Right ventricle myocardium inferior (tissue), 1 donor: ENCODE measurements at regions of chr19 and their contacts with region 1.

Region 1: GRCh38 chr19:45001087-45001739 is at the start of gene RELB:
- DNase-seq: peak; percentile 98
- ATAC-seq: peak; percentile 59
- total RNA-seq, gene RELB: 4.2 TPM

Region 2: DNA sequence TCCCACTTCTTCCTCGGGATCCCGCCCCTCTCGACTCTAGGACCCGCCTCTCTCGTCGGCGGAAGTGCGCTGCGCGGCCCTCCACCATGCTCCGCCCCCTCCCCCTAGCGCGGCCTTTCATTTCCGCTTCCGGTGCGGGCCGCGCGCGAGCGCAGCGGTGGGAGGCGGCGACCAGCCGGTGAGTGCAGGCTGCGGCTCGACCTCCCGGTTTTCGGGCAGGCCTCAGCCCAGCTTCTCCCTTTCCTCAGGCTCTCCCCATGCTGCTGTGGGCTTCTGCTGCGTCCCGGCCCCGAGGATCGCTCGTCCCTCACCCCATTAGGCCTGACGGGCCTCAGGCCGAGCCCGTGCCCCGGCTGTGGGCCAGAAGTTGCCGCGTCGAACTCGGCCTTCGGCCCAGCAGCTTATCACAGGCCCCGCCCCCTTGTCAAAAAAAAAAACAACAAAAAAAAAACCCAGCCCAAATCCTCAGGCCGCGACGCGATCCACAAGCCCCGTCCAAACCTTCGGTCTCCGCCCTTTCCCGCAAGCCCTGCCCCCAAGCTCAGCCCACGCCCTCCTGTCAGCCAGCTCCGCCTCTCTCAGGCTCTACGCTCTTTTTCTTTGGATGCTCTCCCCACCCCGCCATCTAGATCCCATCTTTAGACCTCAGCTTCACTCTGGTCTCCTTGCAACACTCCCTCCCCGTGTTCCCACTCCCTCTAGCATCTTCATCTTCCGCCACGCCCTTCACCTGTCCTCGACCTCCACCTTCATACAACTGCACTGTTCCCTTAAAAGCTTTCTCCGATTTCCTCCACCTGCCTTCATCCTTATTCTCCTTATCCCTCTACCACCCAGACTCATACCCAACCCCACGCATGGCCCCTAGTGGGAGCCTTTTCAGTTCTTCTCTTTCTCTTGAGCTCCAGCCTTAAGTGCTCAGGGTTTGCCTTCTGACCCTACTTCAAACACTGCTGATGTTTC is 38.0 kb after region 1 on chr19 and contains the start of gene CLASRP:
- intact Hi-C with region 1: loop called (anchors 2 kb)
- DNase-seq: peak; percentile 96
- ATAC-seq: peak; percentile 99
- total RNA-seq, gene CLASRP: 33.4 TPM